HCT116 (cell line): ENCODE measurements at regions of chr19 and their contacts with region 1.

Region 1: GRCh38 chr19:39212375-39212742 is 8.3 kb upstream of the SYCN start:
- DNase-seq: peak; percentile 53
- ATAC-seq: peak; percentile 97
- H3K4me3 ChIP-seq: no peak overlapping the region
- H3K27ac ChIP-seq: no peak overlapping the region
- H3K4me1 ChIP-seq: peaks cover 9 to 12% of the 10 kb centered on the region in 2 experiments; a peak in 3 of 4 replicates
- H3K27me3 ChIP-seq: no peaks in the 10 kb centered on the region
- CTCF ChIP-seq: peak; percentile 68 to 96 (median 85)
- POLR2A ChIP-seq: no peak
- RAD21 ChIP-seq: peak; percentile 98

Region 2: DNA sequence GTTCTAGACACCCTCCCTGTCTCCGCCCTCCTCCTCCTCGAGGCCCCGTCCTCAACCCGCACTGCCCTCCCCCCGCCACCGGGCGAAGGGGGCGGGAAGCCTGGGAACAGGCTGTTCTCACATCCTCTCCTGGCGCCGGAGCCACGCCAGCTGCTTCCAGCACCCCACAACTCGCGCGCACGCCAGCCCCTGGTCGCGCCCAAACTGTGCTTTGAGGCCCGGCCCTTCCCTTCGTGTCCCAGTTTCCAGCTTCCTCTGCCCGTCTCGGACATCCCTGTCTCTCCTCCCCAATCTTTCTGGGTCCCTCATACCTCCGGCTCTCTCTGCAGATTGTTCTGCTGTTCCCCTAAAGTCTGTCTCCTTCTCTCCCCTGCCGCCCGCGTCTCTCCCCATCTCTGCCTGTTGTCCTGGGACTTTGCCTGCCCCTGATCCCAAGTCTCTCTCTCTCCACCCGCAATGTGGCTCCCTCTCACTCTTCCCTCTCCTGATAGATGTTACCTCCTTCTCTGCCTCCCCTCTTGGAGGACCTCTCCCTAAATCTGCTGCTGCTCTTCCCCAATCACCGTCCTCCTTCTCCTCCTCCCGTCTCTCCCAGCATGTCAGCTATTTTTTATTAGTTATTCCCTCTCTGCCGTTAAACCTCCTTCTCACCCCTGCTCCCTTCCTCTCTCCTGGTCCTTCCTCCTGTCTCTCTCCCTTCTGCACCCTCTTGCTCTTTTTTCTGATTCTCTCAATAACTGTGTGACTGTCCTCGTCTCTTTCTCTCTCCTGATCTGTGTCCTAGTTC is 1002.5 kb before region 1 on chr19:
- CTCF ChIA-PET with region 1: no interaction called
- POLR2A ChIA-PET with region 1: no interaction called
- RAD21 ChIA-PET with region 1: no interaction called
- intact Hi-C with region 1: no loop called
- DNase-seq: no peak
- ATAC-seq: peak; percentile 57
- H3K4me3 ChIP-seq: no peak overlapping the region
- H3K27ac ChIP-seq: no peak overlapping the region
- H3K4me1 ChIP-seq: peaks cover 0 to 7% of the 10 kb centered on the region in 2 experiments; a peak in 1 of 4 replicates
- H3K27me3 ChIP-seq: no peaks in the 10 kb centered on the region
- CTCF ChIP-seq: 0 out of 6 replicates have a peak, but pooled peaks of 1 of the 3 experiments have one; percentile 10
- POLR2A ChIP-seq: no peak
- RAD21 ChIP-seq: no peak

Region 3: DNA sequence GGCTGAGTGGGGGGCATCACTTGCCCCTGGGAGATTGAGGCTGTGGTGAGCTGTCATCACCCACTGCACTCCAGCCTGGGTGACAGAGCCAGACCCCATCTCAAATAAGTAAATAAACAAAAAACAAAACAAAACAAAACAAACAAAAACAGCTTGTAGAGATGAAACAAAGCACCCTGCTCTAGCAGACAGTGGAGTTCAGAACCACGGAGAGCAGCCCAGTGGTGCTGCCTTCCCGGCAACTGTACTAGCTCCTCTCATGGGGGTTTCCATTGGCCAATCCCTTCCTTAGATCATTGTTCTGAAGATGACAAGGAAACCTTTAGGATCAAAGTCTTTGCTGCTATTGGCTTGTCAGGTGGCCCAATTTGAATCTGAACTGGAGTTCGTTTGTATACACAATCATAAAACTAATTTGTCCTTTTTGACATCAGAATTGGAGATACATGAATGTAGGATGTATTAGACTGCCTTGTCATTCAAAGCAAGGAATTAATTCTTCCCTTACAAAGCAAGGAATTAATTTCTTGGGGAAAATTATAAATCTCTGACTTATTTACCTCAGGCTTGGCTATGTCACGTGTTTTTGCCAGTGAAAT is 11.4 kb after region 1 on chr19:
- CTCF ChIA-PET with region 1: no interaction called
- POLR2A ChIA-PET with region 1: no interaction called
- RAD21 ChIA-PET with region 1: no interaction called
- intact Hi-C with region 1: no loop called
- DNase-seq: no peak
- ATAC-seq: 0 out of 2 replicates have a peak, but pooled peaks have one; percentile 36
- H3K4me3 ChIP-seq: no peak overlapping the region
- H3K27ac ChIP-seq: no peak overlapping the region
- H3K4me1 ChIP-seq: no peaks in the 10 kb centered on the region
- H3K27me3 ChIP-seq: peaks cover 7% of the 10 kb centered on the region; the same call in 1 of the 2 replicates
- CTCF ChIP-seq: no peak
- POLR2A ChIP-seq: no peak
- RAD21 ChIP-seq: no peak

Region 4: GRCh38 chr19:39328046-39328705 is 115.8 kb after region 1 on chr19:
- CTCF ChIA-PET with region 1: interaction called, 32 read pairs
- POLR2A ChIA-PET with region 1: interaction called, 3 read pairs
- RAD21 ChIA-PET with region 1: interaction called, 3 read pairs
- intact Hi-C with region 1: loop called (anchors 1 kb)
- DNase-seq: no peak
- ATAC-seq: peak; percentile 83
- H3K4me3 ChIP-seq: no peak overlapping the region
- H3K27ac ChIP-seq: no peak overlapping the region
- H3K4me1 ChIP-seq: peaks cover 0 to 12% of the 10 kb centered on the region in 2 experiments; a peak in 1 of 4 replicates
- H3K27me3 ChIP-seq: no peaks in the 10 kb centered on the region
- CTCF ChIP-seq: peak; percentile 95 to 98 (median 96)
- POLR2A ChIP-seq: no peak
- RAD21 ChIP-seq: peak; percentile 97

Region 5: DNA sequence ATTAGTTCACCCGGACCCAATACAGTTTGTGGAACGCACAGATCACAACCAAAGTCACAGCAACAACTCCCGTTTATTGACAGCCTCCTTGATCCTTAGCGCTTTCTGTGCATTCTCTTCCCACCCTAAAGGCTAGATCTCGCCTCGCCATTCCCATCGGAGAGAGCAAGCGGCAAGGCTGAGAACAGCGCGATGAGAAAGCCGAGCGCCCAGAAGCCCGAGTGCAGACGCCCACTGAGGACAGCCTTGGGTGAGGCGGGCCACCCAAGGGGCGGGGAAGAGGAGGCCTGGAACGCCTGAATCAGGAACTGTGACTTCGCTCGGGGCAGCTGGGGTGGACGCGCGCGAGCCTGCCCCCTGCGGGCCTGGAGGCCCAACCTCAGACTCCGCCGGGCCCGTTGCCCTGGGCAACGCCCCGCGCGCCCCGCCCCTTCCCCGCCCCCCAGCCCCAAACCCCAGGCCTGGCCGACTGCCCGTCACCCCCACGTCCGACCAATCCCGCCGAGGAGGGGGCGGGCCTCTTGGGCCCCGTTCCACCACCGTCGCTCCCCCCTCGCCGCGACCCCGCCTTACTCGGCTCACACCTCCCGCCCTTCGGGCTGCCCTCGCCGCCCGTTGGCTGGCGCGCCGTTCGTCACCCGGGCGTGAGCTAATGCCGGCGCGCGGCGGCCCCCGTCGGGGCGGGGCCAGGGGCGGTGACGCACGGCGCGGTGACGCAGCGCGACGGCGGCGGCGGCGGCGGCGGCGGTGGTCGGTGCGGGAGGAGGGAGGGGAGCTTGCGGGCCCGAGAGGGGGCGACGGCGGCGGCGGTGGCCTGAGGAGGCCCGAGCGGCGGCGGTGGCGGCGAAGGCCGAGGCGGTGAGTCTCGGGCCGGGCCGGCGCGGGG is 129.6 kb after region 1 on chr19 and contains the start of gene SAMD4B:
- CTCF ChIA-PET with region 1: interaction called, 5 read pairs
- POLR2A ChIA-PET with region 1: no interaction called
- RAD21 ChIA-PET with region 1: no interaction called
- intact Hi-C with region 1: loop called (anchors 1 kb)
- DNase-seq: peak; percentile 93
- ATAC-seq: peak; percentile 92
- H3K4me3 ChIP-seq: peak within 1 kb of the TSS; percentile 91 to 92
- H3K27ac ChIP-seq: peak within 1 kb of the TSS; percentile 86
- H3K4me1 ChIP-seq: peaks cover 8 to 27% of the 10 kb centered on the region in 2 experiments
- H3K27me3 ChIP-seq: no peaks in the 10 kb centered on the region
- CTCF ChIP-seq: peak; percentile 26 to 67 (median 45); a peak in 3 of 6 replicates
- POLR2A ChIP-seq: peak; percentile 91
- RAD21 ChIP-seq: no peak
- total RNA-seq, gene SAMD4B: 127 TPM

Region 6: GRCh38 chr19:39352381-39353255 is 140.3 kb after region 1 on chr19:
- CTCF ChIA-PET with region 1: no interaction called
- POLR2A ChIA-PET with region 1: no interaction called
- RAD21 ChIA-PET with region 1: no interaction called
- intact Hi-C with region 1: no loop called
- DNase-seq: no peak
- ATAC-seq: no peak
- H3K4me3 ChIP-seq: no peak overlapping the region
- H3K27ac ChIP-seq: no peak overlapping the region
- H3K4me1 ChIP-seq: no peaks in the 10 kb centered on the region
- H3K27me3 ChIP-seq: no peaks in the 10 kb centered on the region
- CTCF ChIP-seq: no peak
- POLR2A ChIP-seq: no peak
- RAD21 ChIP-seq: no peak

Region 7: DNA sequence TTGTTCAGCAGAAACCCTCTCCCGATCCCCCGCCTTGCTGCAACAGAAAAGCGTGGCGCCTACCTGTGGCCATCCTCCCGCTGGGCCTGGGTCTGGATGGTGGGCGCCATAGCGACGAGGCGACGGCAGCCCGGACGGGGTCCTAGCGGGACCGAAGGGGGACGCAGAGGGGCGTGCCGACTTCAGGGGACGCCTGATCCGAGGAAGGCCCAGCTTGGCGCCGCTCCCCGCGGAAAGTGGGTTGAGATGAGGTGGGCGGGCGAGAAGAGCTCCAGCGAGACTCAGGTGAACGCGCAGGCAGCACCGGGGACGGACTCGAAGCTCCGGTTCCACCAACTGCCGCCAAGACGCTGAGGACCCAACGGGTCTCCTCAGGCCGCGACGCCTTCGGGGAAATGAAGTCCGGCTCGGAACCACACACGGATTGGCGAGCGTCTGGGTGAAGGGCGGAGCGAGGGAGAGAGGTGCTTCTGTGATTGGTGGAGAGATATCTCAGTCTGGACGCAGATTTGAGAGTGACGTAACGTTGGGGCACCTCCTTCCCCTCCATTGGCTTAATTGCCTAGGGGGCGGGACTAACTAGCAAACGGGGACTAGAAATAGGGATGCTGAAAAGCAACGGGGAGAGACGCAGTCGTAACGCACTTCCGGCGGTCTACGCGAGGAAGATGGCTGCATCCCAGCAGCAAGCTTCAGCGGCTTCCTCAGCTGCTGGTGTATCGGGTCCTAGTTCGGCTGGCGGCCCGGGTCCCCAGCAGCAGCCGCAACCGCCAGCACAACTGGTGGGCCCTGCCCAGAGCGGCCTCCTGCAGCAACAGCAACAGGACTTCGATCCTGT is 178.6 kb after region 1 on chr19 and contains the starts of genes MED29 and PAF1:
- CTCF ChIA-PET with region 1: no interaction called
- POLR2A ChIA-PET with region 1: no interaction called
- RAD21 ChIA-PET with region 1: no interaction called
- intact Hi-C with region 1: loop called (anchors 5 kb)
- DNase-seq: peak; percentile 99
- ATAC-seq: peak; percentile 94
- H3K4me3 ChIP-seq: peak within 1 kb of the TSS; percentile 91 to 100
- H3K27ac ChIP-seq: peak within 1 kb of the TSS; percentile 96
- H3K4me1 ChIP-seq: peaks cover 14% of the 10 kb centered on the region in 2 experiments
- H3K27me3 ChIP-seq: no peaks in the 10 kb centered on the region
- CTCF ChIP-seq: no peak
- POLR2A ChIP-seq: peak; percentile 97
- RAD21 ChIP-seq: no peak
- total RNA-seq, gene MED29: 32.0 TPM
- total RNA-seq, gene PAF1: 53.5 TPM

Region 8: GRCh38 chr19:39532233-39533002 is 320.1 kb after region 1 on chr19 and contains the start of gene EID2B:
- CTCF ChIA-PET with region 1: no interaction called
- POLR2A ChIA-PET with region 1: no interaction called
- RAD21 ChIA-PET with region 1: no interaction called
- intact Hi-C with region 1: loop called (anchors 10 kb)
- DNase-seq: peak; percentile 88
- ATAC-seq: peak; percentile 97
- H3K4me3 ChIP-seq: peak within 1 kb of the TSS; percentile 67 to 82
- H3K27ac ChIP-seq: peak within 1 kb of the TSS; percentile 58
- H3K4me1 ChIP-seq: peaks cover 3 to 13% of the 10 kb centered on the region in 2 experiments; a peak in 3 of 4 replicates
- H3K27me3 ChIP-seq: no peaks in the 10 kb centered on the region
- CTCF ChIP-seq: peak; percentile 87 to 91 (median 89)
- POLR2A ChIP-seq: peak; percentile 93
- RAD21 ChIP-seq: peak; percentile 98
- total RNA-seq, gene EID2B: 1.2 TPM